AG04449 (cell line): ENCODE measurements at regions of chr10 and their contacts with region 1.

Region 1: GRCh38 chr10:77173615-77174461 is 463.8 kb downstream of the KCNMA1 start:
- DNase-seq: no peak
- H3K4me3 ChIP-seq: no peak overlapping the region
- CTCF ChIP-seq: peak; percentile 86

Region 2: GRCh38 chr10:76729816-76730487 is 443.9 kb before region 1 on chr10:
- CTCF ChIA-PET with region 1: no interaction called
- POLR2A ChIA-PET with region 1: no interaction called
- DNase-seq: no peak
- H3K4me3 ChIP-seq: no peak overlapping the region
- CTCF ChIP-seq: no peak

Region 3: DNA sequence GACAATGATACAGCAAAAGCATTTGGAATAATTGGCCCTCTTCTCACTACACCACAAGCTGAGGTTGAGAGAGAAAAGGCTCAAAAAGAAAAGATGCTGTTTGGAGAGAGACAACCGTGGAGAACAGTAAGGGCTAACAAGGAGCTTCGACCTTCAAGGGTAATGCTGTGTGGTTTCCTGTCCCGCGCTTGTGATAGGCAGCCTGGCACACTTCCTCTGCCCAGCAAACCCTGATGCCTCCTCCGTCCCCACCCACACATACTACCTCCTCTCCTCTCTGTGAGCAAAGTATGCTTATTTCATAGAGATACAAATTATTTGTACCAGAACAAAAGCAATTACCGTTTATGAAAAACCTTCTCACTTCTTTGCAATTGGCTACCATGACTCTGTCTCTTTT is 291.6 kb before region 1 on chr10:
- CTCF ChIA-PET with region 1: no interaction called
- POLR2A ChIA-PET with region 1: no interaction called
- DNase-seq: no peak
- H3K4me3 ChIP-seq: no peak overlapping the region
- CTCF ChIP-seq: no peak

Region 4: GRCh38 chr10:76962851-76963250 is 211.0 kb before region 1 on chr10:
- CTCF ChIA-PET with region 1: no interaction called
- POLR2A ChIA-PET with region 1: no interaction called
- DNase-seq: no peak
- H3K4me3 ChIP-seq: no peak overlapping the region
- CTCF ChIP-seq: no peak

Region 5: DNA sequence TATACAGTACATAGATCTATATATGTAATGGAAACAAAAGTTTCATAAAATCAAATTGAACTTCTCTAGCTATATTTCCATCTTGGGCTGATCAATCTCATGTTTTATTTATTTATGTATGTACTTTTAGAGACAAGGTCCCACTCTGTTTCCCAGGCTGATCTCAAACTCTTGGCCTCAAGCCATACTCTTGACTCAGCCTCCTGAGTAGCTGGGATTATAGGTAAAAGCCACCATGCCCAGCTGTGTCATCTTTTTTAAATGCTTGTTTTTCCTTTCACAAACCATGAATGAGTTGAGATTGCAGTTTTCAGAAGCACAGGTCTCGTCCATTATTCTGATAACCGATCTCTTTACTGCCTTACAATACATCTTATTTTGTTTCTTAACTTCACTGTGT is 62.9 kb after region 1 on chr10:
- CTCF ChIA-PET with region 1: interaction called, 26 read pairs
- POLR2A ChIA-PET with region 1: no interaction called
- DNase-seq: no peak
- H3K4me3 ChIP-seq: no peak overlapping the region
- CTCF ChIP-seq: no peak

Region 6: GRCh38 chr10:77301305-77301730 is 127.5 kb after region 1 on chr10:
- CTCF ChIA-PET with region 1: interaction called, 23 read pairs
- POLR2A ChIA-PET with region 1: no interaction called
- DNase-seq: no peak
- H3K4me3 ChIP-seq: no peak overlapping the region
- CTCF ChIP-seq: no peak

Region 7: DNA sequence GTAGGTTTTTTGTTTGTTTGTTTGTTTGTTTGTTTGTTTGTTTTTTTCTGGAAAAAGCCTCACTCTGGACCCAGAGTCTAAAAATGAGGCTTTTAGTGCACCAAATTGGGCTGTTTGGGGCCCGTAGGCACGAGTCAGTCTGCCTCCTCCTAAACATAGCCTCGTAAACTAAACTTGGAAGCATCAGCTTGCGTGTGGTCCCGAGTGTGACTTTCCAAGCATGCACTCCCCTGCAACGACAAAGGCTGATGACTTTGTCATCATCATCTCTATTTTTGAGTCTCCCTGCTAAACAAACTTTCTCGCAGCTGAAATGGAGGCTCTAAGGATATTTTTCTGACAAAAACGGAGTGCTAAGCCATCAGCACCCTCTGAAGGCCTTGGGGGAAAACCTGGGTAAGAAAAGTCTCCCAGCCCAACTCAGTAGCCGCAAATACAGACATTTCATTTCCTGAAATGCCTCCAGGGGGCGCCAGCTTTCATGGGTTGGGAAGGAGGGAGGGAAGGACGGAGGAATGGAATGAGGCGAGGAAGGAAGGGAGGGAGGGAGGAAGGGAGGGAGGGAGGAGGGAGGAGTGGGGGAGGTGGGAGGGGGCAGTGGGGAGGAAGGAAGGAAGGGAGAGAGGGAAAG is 217.9 kb after region 1 on chr10:
- CTCF ChIA-PET with region 1: interaction called, 127 read pairs
- POLR2A ChIA-PET with region 1: no interaction called
- DNase-seq: peak; percentile 49
- H3K4me3 ChIP-seq: no peak overlapping the region
- CTCF ChIP-seq: peak; percentile 83

Region 8: DNA sequence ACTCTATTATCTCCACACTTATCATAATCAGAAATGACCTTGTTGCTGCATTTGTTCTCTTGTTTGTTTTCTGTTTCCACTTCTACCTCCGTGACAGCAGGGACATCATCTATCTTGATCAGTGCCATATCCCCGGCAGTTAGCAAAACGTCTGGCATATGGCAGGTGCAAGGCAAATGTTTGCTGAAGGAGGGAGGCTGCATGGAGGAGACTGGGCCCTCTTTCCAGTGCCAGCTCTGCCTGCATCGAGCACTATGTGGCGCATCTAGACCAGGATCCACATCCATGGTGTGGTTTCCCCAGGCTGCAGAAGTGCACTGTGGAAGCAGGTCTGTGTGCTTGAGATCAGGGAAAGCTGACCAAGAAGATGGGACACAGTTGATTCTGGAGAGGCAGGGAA is 282.6 kb after region 1 on chr10:
- CTCF ChIA-PET with region 1: interaction called, 14 read pairs
- POLR2A ChIA-PET with region 1: no interaction called
- DNase-seq: no peak
- H3K4me3 ChIP-seq: no peak overlapping the region
- CTCF ChIP-seq: peak; percentile 2

Region 9: GRCh38 chr10:77641788-77642397 is 468.1 kb after region 1 on chr10:
- CTCF ChIA-PET with region 1: interaction called, 556 read pairs
- POLR2A ChIA-PET with region 1: no interaction called
- DNase-seq: peak; percentile 45
- H3K4me3 ChIP-seq: no peak overlapping the region
- CTCF ChIP-seq: peak; percentile 50